Esophagus squamous epithelium (tissue), 5 donors: ENCODE measurements at regions of chr19 and their contacts with region 1.

Region 1: GRCh38 chr19:54029930-54030490 is 33.7 kb downstream of the VSTM1 start:
- DNase-seq: no peak
- H3K4me3 ChIP-seq: no peak overlapping the region
- H3K27ac ChIP-seq: no peak overlapping the region
- H3K4me1 ChIP-seq: no peaks in the 10 kb centered on the region
- H3K27me3 ChIP-seq: peaks cover 0 to 53% (median 0%) of the 10 kb centered on the region in 4 donors
- CTCF ChIP-seq: peak in 4 of 6 experiments; percentile 20 to 52 (median 44)
- POLR2A ChIP-seq: no peak

Region 2: DNA sequence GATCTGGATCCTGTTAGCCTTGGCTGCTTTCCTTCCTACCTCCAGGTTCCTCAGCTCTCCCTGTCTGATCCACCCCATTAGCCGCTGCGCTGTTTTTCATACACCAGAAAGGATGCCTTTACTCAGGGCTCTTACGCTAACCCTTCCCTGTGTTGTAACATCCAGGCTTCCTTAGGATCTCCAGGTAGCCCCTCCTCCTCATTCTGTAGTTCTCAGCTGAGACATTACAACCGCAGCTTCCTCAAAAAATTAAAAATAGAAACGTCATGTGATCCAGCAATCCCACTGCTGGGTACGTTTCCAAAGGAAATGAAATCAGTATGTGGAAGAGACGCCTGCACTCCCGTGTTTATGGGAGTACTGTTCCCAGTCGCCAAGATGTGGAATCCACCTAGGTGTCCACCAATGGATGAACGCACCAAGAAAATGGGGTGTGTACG is 180.8 kb before region 1 on chr19:
- intact Hi-C with region 1: loop called (anchors 10 kb)
- DNase-seq: no peak
- H3K4me3 ChIP-seq: no peak overlapping the region
- H3K27ac ChIP-seq: peak overlapping the region in 2 of 4 donors; percentile 34 to 49
- H3K4me1 ChIP-seq: peaks cover 0 to 22% (median 0%) of the 10 kb centered on the region in 3 donors
- H3K27me3 ChIP-seq: peaks cover 0 to 21% (median 0%) of the 10 kb centered on the region in 4 donors
- CTCF ChIP-seq: no peak
- POLR2A ChIP-seq: no peak

Region 3: GRCh38 chr19:53903064-53903680 is 126.8 kb before region 1 on chr19:
- intact Hi-C with region 1: loop called (anchors 5 kb)
- DNase-seq: no peak
- H3K4me3 ChIP-seq: no peak overlapping the region
- H3K27ac ChIP-seq: no peak overlapping the region
- H3K4me1 ChIP-seq: peaks cover 0 to 18% (median 6%) of the 10 kb centered on the region in 3 donors
- H3K27me3 ChIP-seq: peaks cover 4 to 72% (median 15%) of the 10 kb centered on the region in 4 donors
- CTCF ChIP-seq: no peak
- POLR2A ChIP-seq: no peak

Region 4: GRCh38 chr19:54201172-54201701 is 171.2 kb after region 1 on chr19:
- intact Hi-C with region 1: no loop called
- DNase-seq: no peak
- H3K4me3 ChIP-seq: peak overlapping the region; percentile 63 to 85 (median 78)
- H3K27ac ChIP-seq: peak overlapping the region; percentile 91 to 99 (median 94)
- H3K4me1 ChIP-seq: peaks cover 21 to 59% (median 49%) of the 10 kb centered on the region in 3 donors
- H3K27me3 ChIP-seq: no peaks in the 10 kb centered on the region
- CTCF ChIP-seq: no peak
- POLR2A ChIP-seq: no peak